Endothelial cell of umbilical vein (primary cell): ENCODE measurements at regions of chr11 and their contacts with region 1.

Region 1: DNA sequence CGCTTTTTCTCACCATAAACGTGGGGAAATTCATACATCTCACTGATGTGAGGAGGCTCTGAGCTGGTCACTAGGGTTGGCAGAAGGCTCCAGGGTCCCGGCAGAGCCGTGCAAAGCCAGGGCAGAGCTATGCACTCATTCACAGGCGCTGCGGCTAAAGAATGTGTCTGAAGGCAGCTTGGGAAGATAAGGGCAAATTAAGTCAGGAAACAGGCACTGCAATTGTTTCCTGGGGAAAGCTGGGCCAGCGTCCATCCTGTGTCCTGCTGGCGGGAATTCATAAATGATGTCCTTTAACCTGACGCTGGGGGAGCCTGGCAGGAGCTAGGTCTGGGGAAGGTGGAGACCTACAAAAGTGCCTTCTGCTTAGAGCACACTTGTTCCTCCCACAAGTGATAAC is 27.6 kb downstream of the PKNOX2 start:
- DNase-seq: peak; percentile 87
- H3K4me3 ChIP-seq: no peak overlapping the region
- H3K27ac ChIP-seq: no peak overlapping the region
- H3K4me1 ChIP-seq: peaks cover 8% of the 10 kb centered on the region
- H3K27me3 ChIP-seq: peaks cover 4 to 8% of the 10 kb centered on the region in 2 experiments
- CTCF ChIP-seq: peak in 1 of 2 donors; percentile 32
- POLR2A ChIP-seq: peak; percentile 40

Region 2: GRCh38 chr11:125180413-125181305 is 11.5 kb before region 1 on chr11:
- CTCF ChIA-PET with region 1: interaction called, 12 read pairs
- POLR2A ChIA-PET with region 1: no interaction called
- dilution Hi-C with region 1: no loop called
- intact Hi-C with region 1: no loop called
- DNase-seq: peak; percentile 32
- H3K4me3 ChIP-seq: no peak overlapping the region
- H3K27ac ChIP-seq: no peak overlapping the region
- H3K4me1 ChIP-seq: no peaks in the 10 kb centered on the region
- H3K27me3 ChIP-seq: peaks cover 2 to 16% of the 10 kb centered on the region in 2 experiments
- CTCF ChIP-seq: no peak
- POLR2A ChIP-seq: no peak